ENCODE measurements at regions of chr7 and their contacts with region 1.

Region 1: DNA sequence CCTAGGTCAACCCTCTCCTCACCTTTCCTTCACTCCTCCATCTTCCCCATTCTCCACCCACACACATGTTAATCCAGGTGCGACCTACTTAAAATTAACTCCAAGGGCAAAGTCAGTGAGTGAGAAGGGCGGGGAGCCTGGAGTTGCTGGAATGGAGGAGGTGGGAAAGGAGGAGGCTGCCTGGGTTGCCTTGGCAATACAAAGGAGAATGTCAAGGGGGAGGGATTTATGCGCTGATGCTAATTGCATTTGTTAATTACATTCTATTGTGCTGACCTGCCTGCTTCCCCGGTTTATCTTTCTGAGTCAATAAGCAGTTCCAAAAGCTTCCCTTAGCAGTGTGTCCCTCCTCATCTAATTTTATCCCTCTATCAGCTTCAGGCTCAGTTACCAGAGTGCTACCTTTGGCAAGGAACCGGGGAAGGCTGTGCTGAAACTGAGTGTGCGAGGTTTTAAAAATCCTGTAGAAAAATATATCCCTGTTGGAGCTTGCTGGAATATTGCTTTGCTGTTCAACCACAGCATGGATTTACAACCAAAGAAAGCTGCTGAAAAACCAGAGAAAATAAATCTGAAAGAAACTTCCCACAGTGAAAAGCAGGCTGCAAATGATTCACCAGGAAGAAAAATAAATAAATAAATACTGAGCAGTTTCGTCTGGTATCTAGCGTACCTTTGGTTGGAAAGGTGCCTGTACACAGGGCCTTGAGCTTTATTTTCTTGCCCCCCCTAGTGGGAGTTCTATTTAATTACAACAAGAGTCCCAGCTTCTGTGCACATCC is 113.2 kb upstream of the DGKB start:
- DNase-seq: peak in 2 of 5 donors; percentile 9 to 24
- H3K4me3 ChIP-seq: no peak overlapping the region
- H3K27ac ChIP-seq: no peak overlapping the region
- H3K4me1 ChIP-seq: no peaks in the 10 kb centered on the region
- H3K27me3 ChIP-seq: no peaks in the 10 kb centered on the region
- CTCF ChIP-seq: peak in 2 of 3 donors; percentile 28 to 34
- EP300 ChIP-seq: no peak
- POLR2A ChIP-seq: no peak

Region 2: GRCh38 chr7:14717816-14718215 is 297.9 kb before region 1 on chr7:
- intact Hi-C with region 1: loop called in 1 of 4 experiments (anchors 10 kb)
- DNase-seq: no peak
- H3K4me3 ChIP-seq: no peak overlapping the region
- H3K27ac ChIP-seq: no peak overlapping the region
- H3K4me1 ChIP-seq: no peaks in the 10 kb centered on the region
- H3K27me3 ChIP-seq: no peaks in the 10 kb centered on the region
- CTCF ChIP-seq: no peak
- EP300 ChIP-seq: no peak
- POLR2A ChIP-seq: no peak

Region 3: DNA sequence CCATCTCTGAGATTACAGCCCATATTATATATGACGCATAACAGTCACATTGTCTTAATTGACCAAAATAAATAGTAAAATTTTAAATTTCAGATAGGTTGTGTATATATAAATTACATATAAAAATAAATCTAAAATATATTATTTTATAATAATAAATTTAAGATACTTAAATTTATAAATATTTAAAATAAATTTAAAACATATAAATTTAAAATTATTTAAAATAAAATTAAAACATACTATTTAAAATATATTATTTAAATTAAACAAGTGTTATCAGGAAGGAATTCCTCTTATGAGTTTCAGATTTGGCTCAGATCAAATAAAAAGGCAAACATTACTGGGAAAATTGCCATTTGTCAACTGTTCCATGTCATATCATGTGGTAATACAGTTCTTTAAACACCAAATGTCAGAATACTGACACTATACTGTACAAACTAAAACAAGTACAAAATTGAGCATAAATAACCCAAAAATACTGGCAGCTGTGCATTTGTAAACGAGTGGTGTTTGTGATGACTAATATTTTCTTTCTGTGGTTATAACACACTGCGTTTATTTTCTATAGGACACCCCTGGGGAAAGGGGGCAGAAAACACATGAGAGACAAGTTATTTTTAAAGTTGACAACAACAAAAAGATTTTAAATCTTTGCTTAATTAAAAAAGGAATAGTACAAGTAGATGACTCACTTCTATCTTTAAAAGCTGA is 41.9 kb before region 1 on chr7:
- intact Hi-C with region 1: no loop called
- DNase-seq: no peak
- H3K4me3 ChIP-seq: no peak overlapping the region
- H3K27ac ChIP-seq: no peak overlapping the region
- H3K4me1 ChIP-seq: no peaks in the 10 kb centered on the region
- H3K27me3 ChIP-seq: no peaks in the 10 kb centered on the region
- CTCF ChIP-seq: no peak
- EP300 ChIP-seq: no peak
- POLR2A ChIP-seq: no peak